ENCODE measurements at regions of chr2 and their contacts with region 1.

Region 1: GRCh38 chr2:7672027-7672684 is 754.9 kb downstream of the RNF144A start:
- DNase-seq: peak; percentile 43
- H3K4me3 Mint-ChIP-seq: peak overlapping the region; percentile 71
- H3K27ac Mint-ChIP-seq: peak overlapping the region; percentile 93
- H3K4me1 Mint-ChIP-seq: peaks cover 79% of the 10 kb centered on the region
- H3K27me3 Mint-ChIP-seq: no peaks in the 10 kb centered on the region

Region 2: DNA sequence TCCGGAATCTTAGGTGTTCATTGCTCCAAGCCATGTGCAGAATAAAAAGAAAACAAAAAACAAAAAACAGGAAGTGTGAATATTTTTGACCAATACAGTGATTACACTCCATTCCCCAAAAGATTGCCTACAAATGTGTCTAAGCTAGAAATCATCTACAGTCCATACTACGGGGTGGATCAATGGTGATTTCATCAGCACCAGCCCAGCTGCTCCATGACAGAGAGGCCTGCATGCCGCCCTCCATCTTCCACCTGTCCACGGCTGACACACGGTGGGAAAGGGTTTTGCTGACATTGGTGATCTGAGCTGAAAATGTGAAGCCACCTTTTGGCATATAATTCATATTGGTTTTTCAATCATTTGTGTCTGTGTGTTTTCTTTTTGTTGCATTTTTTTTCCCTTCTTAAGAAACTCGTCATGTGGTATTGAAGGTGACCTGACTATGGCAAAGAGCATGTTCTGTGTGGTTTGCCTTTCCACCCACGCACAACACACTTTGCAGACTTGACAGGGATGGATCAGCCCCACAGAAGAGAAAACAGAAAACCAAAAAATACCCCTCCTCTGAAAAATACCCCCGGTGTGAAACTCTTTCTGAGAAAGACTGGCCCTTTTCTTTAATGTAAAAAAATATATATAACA is 221.8 kb before region 1 on chr2:
- intact Hi-C with region 1: loop called (anchors 1 kb)
- DNase-seq: peak; percentile 65
- H3K4me3 Mint-ChIP-seq: peak overlapping the region; percentile 9
- H3K27ac Mint-ChIP-seq: peak overlapping the region; percentile 98
- H3K4me1 Mint-ChIP-seq: peaks cover 90% of the 10 kb centered on the region
- H3K27me3 Mint-ChIP-seq: no peaks in the 10 kb centered on the region

Region 3: DNA sequence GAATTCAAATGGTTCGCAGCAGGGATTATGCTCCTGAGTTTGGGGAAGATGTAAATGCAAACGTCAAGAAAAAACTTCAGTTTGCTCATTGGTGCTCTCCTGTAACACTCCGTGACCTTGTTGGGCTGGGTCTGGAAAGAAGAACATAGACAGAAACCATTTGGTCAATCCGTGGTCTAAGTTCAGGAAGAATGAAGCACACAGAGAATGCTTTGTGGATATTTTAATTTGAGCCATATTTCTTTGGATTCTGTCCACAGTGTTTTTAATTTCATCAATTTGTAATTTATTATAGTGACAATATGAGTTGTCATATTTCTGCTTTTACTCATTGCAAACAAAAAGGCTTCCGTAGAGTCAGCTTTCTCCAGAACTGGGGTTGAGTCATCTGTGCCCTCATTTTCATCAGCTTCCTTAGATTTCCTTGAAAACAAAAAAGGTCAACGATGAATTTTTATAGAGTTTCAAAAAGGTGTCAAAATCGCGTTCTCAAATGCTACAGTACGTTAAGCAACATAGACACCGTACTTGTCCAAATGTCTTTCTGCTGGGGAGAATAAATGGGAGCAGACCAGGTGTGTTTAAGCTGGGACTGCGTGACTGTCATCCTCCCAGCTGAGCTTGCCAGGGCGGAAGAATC is 148.6 kb before region 1 on chr2:
- intact Hi-C with region 1: loop called (anchors 2 kb)
- DNase-seq: no peak
- H3K4me3 Mint-ChIP-seq: peak overlapping the region; percentile 2
- H3K27ac Mint-ChIP-seq: peak overlapping the region; percentile 90
- H3K4me1 Mint-ChIP-seq: peaks cover 77% of the 10 kb centered on the region
- H3K27me3 Mint-ChIP-seq: no peaks in the 10 kb centered on the region

Region 4: GRCh38 chr2:7552825-7553570 is 119.2 kb before region 1 on chr2:
- intact Hi-C with region 1: no loop called
- DNase-seq: peak; percentile 8
- H3K4me3 Mint-ChIP-seq: peak overlapping the region; percentile 55
- H3K27ac Mint-ChIP-seq: peak overlapping the region; percentile 46
- H3K4me1 Mint-ChIP-seq: peaks cover 25% of the 10 kb centered on the region
- H3K27me3 Mint-ChIP-seq: no peaks in the 10 kb centered on the region

Region 5: DNA sequence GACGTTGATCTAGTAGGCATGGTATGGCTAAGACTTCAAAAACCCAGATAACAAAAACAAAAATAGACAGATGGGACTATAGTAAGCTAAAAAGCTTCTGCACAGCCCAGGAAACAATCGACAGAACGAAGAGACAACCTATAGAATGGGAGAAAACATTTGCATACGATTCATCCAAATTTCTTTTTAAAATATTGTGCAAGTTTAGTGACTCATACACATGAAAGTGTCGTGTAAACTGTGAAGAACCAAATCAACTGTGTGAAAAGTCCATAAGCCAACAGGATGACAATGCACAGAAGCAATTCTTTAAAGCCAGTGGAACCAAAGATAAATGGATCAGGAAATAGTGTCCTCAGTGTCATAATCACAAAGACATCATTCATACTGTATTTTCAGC is 83.9 kb before region 1 on chr2:
- intact Hi-C with region 1: loop called (anchors 1 kb)
- DNase-seq: no peak
- H3K4me3 Mint-ChIP-seq: peak overlapping the region; percentile 28
- H3K27ac Mint-ChIP-seq: peak overlapping the region; percentile 61
- H3K4me1 Mint-ChIP-seq: peaks cover 37% of the 10 kb centered on the region
- H3K27me3 Mint-ChIP-seq: no peaks in the 10 kb centered on the region

Region 6: DNA sequence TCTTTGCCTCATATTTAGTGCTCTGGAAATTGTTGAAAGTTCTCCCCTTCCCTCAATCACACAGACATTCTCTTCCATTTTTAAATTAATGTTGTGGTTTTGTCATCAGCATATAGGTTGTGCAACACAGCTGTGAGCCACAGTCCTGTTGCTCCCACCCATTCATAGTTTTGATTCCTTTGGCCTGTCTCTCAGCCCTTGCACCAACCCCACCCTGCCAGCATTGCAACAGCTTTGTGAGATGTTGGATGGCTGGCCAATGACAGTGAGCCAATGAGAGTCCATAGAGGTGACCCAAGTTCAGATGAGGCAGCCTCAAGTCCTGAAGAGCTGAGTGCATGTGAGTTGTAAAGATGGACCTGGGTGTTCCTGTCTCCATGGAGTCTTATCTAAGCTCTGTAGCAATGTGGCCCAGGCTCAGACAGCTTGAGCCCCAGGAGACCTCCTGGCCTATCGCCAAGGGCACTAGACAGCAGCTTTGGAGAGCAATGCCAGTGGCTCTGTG is 20.6 kb after region 1 on chr2:
- intact Hi-C with region 1: loop called (anchors 1 kb)
- DNase-seq: no peak
- H3K4me3 Mint-ChIP-seq: peak overlapping the region; percentile 48
- H3K27ac Mint-ChIP-seq: peak overlapping the region; percentile 94
- H3K4me1 Mint-ChIP-seq: peaks cover 51% of the 10 kb centered on the region
- H3K27me3 Mint-ChIP-seq: no peaks in the 10 kb centered on the region

Region 7: GRCh38 chr2:7845332-7845731 is 173.2 kb after region 1 on chr2:
- intact Hi-C with region 1: loop called (anchors 2 kb)
- DNase-seq: no peak
- H3K4me3 Mint-ChIP-seq: no peak overlapping the region
- H3K27ac Mint-ChIP-seq: no peak overlapping the region
- H3K4me1 Mint-ChIP-seq: peaks cover 57% of the 10 kb centered on the region
- H3K27me3 Mint-ChIP-seq: no peaks in the 10 kb centered on the region

Region 8: GRCh38 chr2:8488001-8488738 is 816.0 kb after region 1 on chr2:
- intact Hi-C with region 1: loop called (anchors 10 kb)
- DNase-seq: peak; percentile 57
- H3K4me3 Mint-ChIP-seq: peak overlapping the region; percentile 75
- H3K27ac Mint-ChIP-seq: peak overlapping the region; percentile 86
- H3K4me1 Mint-ChIP-seq: peaks cover 61% of the 10 kb centered on the region
- H3K27me3 Mint-ChIP-seq: no peaks in the 10 kb centered on the region